T-cell (primary cell): ENCODE measurements at regions of chr15 and their contacts with region 1.

Region 1: GRCh38 chr15:68252925-68253534 is 23.5 kb upstream of the CLN6 start:
- DNase-seq: peak in 18 of 35 experiments; percentile 9 to 75 (median 30)
- ATAC-seq: peak; percentile 45 to 67 (median 57)
- H3K4me3 ChIP-seq: no peak overlapping the region
- H3K4me3 Mint-ChIP-seq: no peak overlapping the region
- H3K27ac ChIP-seq: no peak overlapping the region
- H3K27ac Mint-ChIP-seq: peak overlapping the region in 1 of 2 donors; percentile 8
- H3K4me1 ChIP-seq: peaks cover 0 to 14% of the 10 kb centered on the region in 2 experiments
- H3K4me1 Mint-ChIP-seq: peaks cover 0 to 14% (median 4%) of the 10 kb centered on the region in 3 donors
- H3K27me3 ChIP-seq: peaks cover 0 to 19% of the 10 kb centered on the region in 2 experiments
- H3K27me3 Mint-ChIP-seq: peaks cover 3 to 10% of the 10 kb centered on the region in 2 donors

Region 2: GRCh38 chr15:68229386-68230156 is 23.5 kb before region 1 on chr15 and contains the start of gene CLN6:
- CTCF ChIA-PET with region 1: no interaction called
- POLR2A ChIA-PET with region 1: no interaction called
- DNase-seq: peak; percentile 62 to 86 (median 74)
- ATAC-seq: peak; percentile 85 to 95 (median 90)
- H3K4me3 ChIP-seq: peak within 1 kb of the TSS; percentile 73 to 79
- H3K4me3 Mint-ChIP-seq: peak within 1 kb of the TSS; percentile 77 to 94 (median 90)
- H3K27ac ChIP-seq: peak within 1 kb of the TSS; percentile 53
- H3K27ac Mint-ChIP-seq: peak within 1 kb of the TSS; percentile 86 to 90
- H3K4me1 ChIP-seq: peaks cover 7 to 31% of the 10 kb centered on the region in 2 experiments
- H3K4me1 Mint-ChIP-seq: peaks cover 28 to 39% (median 35%) of the 10 kb centered on the region in 3 donors
- H3K27me3 ChIP-seq: peaks cover 0 to 25% of the 10 kb centered on the region in 2 experiments
- H3K27me3 Mint-ChIP-seq: peaks cover 4 to 6% of the 10 kb centered on the region in 2 donors
- total RNA-seq, gene CLN6: 15.4 to 24.0 (median 17.9) TPM

Region 3: DNA sequence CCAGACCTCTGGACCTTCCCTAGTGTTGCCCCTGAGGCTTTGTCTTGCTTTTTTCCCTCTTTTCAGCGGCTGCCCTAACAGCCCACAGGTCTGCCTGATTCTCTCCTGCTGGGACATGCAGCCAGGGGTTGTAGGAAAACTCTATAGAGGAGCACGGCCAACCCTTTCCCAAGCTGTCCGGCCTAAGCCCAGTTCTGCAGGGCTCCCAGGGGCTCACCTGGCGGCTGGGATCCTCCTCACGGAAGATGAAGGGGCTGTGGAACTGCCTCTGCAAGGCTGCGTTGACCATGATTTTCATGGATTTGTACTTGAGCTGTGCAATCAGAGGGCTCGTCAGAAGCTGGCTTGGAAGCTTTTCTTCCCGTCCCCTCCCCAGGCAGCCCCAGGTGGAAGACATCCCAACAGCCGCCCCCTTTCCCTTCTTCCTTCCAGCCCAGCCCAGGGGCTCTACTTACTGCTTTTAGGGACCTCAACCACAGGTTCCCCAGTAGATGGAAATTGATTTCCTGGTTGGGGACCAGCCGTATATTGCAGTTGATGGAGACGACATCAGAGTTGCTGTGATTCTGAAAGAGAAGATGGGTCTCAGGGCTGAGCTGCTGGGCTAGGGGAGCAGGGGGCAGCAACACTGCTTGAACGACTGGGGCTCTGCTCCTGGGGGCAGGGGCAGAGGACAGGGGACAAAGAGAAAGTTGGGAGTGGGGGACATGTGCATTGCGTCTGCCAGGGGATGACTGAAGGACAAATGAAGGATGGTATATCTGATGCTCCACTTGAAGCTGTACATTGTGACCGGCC is 54.3 kb after region 1 on chr15:
- CTCF ChIA-PET with region 1: interaction called, 8 to 29 read pairs
- POLR2A ChIA-PET with region 1: no interaction called
- DNase-seq: peak in 2 of 35 experiments; percentile 3 to 12
- ATAC-seq: no peak
- H3K4me3 ChIP-seq: no peak overlapping the region
- H3K4me3 Mint-ChIP-seq: peak overlapping the region in 1 of 3 donors; percentile 39
- H3K27ac ChIP-seq: no peak overlapping the region
- H3K27ac Mint-ChIP-seq: no peak overlapping the region
- H3K4me1 ChIP-seq: peaks cover 0 to 9% of the 10 kb centered on the region in 2 experiments
- H3K4me1 Mint-ChIP-seq: peaks cover 10 to 11% (median 11%) of the 10 kb centered on the region in 3 donors
- H3K27me3 ChIP-seq: peaks cover 0 to 22% of the 10 kb centered on the region in 2 experiments
- H3K27me3 Mint-ChIP-seq: peaks cover 3 to 5% of the 10 kb centered on the region in 2 donors

Region 4: DNA sequence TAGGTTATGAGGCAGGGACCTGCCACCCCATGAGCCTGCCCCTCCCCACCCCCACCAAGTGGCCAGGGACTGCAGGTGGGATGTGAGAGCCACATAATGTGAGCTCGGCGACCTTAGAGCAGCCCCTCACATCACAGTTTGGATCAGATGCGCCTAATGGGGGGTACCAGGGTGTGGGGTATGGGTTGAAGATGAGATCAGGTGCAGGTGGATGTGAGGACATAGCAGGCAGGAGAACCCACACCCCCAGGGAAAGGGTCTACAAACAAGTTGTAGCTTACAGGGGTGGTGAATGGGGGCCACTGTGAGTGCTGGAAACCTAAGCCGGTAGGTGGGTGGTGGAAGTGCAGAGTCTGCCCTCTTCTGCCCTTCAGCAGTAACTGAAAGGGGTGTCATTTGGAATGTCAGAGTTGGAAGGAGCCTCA is 419.8 kb after region 1 on chr15:
- CTCF ChIA-PET with region 1: interaction called, 4 to 12 read pairs
- POLR2A ChIA-PET with region 1: no interaction called
- DNase-seq: no peak
- ATAC-seq: no peak
- H3K4me3 ChIP-seq: no peak overlapping the region
- H3K4me3 Mint-ChIP-seq: no peak overlapping the region
- H3K27ac ChIP-seq: no peak overlapping the region
- H3K27ac Mint-ChIP-seq: no peak overlapping the region
- H3K4me1 ChIP-seq: peaks cover 0 to 6% of the 10 kb centered on the region in 2 experiments
- H3K4me1 Mint-ChIP-seq: peaks cover 3 to 8% (median 6%) of the 10 kb centered on the region in 3 donors
- H3K27me3 ChIP-seq: peaks cover 0 to 27% of the 10 kb centered on the region in 2 experiments
- H3K27me3 Mint-ChIP-seq: peaks cover 21 to 24% of the 10 kb centered on the region in 2 donors